Calu3 (cell line): ENCODE measurements at regions of chr3 and their contacts with region 1.

Region 1: DNA sequence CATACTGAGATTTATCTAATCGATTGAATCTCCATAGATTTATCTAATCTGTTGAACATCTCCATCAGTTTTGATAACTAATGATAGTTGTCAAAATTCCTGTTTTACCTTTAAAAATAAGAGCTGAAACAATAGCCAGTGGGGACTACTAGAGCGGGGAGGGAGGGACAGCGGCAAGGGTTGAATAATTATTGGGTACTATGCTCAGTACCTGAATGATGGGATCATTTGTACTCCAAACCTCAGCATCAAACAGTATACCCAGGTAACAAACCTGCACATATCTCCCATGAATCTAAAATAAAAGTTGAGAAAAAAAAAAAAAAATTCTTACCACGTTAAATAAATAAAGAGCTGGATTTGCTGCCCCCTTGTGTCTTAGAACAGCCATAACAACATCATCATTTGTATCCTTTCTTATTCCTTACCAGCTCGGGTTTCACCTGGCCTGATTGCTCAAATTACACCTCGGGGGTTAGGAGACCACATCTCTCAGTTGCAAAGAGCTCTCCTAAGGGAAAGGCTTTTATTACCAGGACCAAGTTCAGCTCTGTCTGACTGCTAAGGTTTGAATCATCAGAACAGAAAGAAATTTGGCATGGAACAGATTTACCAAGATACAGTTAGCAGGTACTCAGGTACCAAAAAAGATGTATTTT is 25.7 kb upstream of the RPL39L start:
- DNase-seq: peak; percentile 65
- H3K4me3 Mint-ChIP-seq: no peak overlapping the region
- H3K27ac Mint-ChIP-seq: no peak overlapping the region
- H3K4me1 Mint-ChIP-seq: peaks cover 23% of the 10 kb centered on the region
- H3K27me3 Mint-ChIP-seq: peaks cover 26% of the 10 kb centered on the region
- CTCF ChIP-seq: peak; percentile 65

Region 2: GRCh38 chr3:186783073-186783730 is 381.8 kb before region 1 on chr3 and contains the start of gene EIF4A2:
- CTCF ChIA-PET with region 1: no interaction called
- intact Hi-C with region 1: no loop called
- DNase-seq: peak; percentile 98
- H3K4me3 Mint-ChIP-seq: peak within 1 kb of the TSS; percentile 81
- H3K27ac Mint-ChIP-seq: peak within 1 kb of the TSS; percentile 98
- H3K4me1 Mint-ChIP-seq: peaks cover 40% of the 10 kb centered on the region
- H3K27me3 Mint-ChIP-seq: peaks cover 17% of the 10 kb centered on the region
- CTCF ChIP-seq: no peak
- total RNA-seq, gene EIF4A2: 593 and 650 TPM in 2 replicates

Region 3: DNA sequence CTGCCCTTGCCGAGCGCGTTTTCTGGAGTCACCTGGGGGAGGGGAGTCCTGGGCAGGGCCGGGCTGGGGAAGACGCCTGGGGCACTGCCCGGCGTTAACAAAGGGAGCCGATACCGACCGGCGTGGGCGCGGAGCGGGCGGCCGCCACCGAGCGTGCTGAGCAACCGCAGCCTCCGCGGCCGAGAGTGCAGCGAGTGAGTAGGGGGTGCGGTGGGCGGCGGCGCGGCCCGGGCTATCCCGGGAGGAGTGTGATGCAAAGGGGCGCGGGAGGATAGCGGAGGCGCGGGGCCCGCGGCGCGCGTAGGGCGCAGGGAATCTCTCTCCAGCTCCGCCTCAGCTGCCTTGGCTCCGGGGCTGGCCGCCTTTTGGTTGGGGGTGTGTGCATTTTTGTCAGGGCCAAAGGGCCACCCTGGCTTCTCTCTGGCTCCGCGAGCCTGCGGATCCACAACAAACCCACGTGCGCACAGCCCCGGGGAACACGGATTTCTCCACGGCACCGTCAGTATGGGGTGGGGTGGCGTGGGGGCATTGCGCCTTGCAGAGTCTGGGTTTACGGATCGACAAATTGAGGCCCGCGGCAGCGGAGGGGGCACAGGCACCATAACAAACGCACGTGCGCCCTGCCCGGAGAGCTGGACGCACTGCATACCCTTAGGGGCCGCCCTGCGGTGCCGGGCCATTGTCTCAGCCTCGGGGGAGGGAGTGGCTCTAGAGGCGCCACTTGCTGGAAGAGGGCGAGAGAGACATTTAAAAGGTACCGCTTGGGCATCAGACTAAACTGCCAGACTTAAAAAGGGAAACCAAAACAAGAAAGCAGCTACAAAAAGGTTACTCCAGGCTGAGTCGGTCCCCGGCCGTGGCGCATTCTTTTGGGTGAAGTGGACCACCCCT is 234.1 kb before region 1 on chr3:
- CTCF ChIA-PET with region 1: interaction called, 4 read pairs
- intact Hi-C with region 1: loop called (anchors 5 kb)
- DNase-seq: peak; percentile 79
- H3K4me3 Mint-ChIP-seq: peak overlapping the region; percentile 80
- H3K27ac Mint-ChIP-seq: peak overlapping the region; percentile 4
- H3K4me1 Mint-ChIP-seq: peaks cover 24% of the 10 kb centered on the region
- H3K27me3 Mint-ChIP-seq: peaks cover 55% of the 10 kb centered on the region
- CTCF ChIP-seq: no peak

Region 4: DNA sequence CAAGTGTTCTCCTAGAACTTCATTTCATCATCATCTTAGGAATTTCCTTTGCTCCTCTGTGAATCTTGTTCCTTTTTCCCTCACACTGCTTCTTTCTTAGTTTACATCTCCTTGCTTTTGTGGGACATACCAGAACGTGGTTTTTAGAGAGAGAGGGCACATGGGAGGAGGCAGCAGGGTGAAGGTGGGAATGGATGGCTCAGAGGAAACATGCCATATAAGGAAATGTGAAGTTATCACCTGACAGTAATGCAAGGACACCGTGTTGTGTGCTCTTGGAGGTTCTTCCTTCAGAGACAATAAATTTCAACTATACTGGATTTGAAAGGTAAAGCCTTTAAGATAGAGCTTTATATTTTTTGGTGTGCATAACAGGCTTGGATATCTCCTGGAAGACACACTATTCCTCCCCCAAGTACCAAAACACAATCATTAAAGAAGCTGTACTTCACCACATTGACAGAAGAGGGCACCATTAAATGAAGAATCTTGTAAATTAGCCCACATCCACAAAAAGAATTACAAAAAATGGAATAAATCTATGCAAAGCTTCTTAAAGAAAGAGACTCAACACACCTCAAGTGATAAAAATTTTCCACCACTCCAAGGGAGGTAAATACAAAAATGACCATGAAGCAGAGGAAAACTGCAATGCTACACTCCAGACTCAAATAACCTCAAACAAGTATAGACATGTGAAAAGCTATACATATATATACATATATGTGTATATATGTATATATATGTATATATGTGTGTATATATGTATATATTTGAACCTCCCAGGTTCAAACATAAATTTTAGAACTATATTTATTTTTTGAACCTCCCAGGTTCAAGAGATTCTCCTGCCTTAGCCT is 51.9 kb before region 1 on chr3:
- CTCF ChIA-PET with region 1: interaction called, 51 read pairs
- intact Hi-C with region 1: loop called (anchors 1 kb)
- DNase-seq: peak; percentile 24
- H3K4me3 Mint-ChIP-seq: no peak overlapping the region
- H3K27ac Mint-ChIP-seq: no peak overlapping the region
- H3K4me1 Mint-ChIP-seq: peaks cover 12% of the 10 kb centered on the region
- H3K27me3 Mint-ChIP-seq: no peaks in the 10 kb centered on the region
- CTCF ChIP-seq: peak; percentile 59

Region 5: DNA sequence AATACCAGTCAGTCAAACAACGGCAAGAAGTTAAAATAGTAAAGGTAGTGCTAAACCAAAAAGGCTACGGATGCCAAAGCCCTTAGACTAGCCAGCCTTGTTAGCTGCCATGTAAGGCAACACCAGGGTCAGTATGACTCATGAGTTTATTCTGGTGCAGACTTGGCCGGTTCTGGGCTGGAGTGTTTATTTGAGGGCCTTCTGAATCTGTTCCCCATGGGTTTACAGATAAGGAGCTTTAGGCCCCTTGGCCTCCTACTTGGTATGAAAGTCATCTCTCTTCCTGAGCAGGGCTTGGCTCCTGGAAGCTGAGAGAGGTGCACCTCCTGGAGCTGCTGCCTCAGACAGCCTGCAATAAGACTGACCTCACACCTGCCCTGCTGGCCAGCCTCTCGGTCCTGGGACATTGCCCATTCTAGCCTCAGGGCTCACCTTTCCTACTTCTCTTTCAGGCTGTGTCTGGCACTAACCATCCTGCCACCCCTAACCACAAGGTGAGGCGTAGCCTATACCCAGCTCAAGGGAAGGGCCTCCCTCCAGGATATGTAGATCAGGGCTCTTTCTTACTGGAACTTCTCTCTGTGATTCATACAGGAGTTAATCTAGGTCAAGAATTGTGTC is 21.9 kb after region 1 on chr3:
- CTCF ChIA-PET with region 1: interaction called, 27 read pairs
- intact Hi-C with region 1: no loop called
- DNase-seq: peak; percentile 86
- H3K4me3 Mint-ChIP-seq: peak overlapping the region; percentile 9
- H3K27ac Mint-ChIP-seq: peak overlapping the region; percentile 76
- H3K4me1 Mint-ChIP-seq: peaks cover 51% of the 10 kb centered on the region
- H3K27me3 Mint-ChIP-seq: no peaks in the 10 kb centered on the region
- CTCF ChIP-seq: no peak